Psoas muscle (tissue), 8 donors: ENCODE measurements at regions of chr21 and their contacts with region 1.

Region 1: DNA sequence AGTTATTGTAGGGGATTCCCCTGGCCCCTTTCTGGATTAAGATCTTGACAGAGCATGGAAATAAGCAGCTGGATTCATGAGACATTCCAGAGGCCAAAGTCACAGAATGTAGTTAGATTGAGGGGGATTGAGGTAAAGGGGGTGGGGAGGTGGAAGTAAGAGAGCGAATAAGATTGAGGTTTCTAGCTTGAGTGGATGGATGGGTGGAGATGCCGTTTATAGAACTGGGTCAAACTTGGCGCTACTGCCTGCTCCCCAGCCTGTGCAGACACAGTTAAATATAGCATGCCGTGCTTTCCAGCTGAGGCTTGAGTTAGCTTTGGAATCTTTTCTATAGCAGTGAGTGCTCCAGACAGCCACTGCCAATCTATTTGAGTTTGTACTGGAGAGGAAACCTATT is 85.7 kb downstream of the DYRK1A start:
- DNase-seq: peak in 1 of 2 donors; percentile 59
- ATAC-seq: peak; percentile 84 to 88 (median 84)
- H3K4me3 ChIP-seq: no peak overlapping the region
- H3K27ac ChIP-seq: peak overlapping the region; percentile 80
- H3K4me1 ChIP-seq: peaks cover 85% of the 10 kb centered on the region
- H3K27me3 ChIP-seq: no peaks in the 10 kb centered on the region
- CTCF ChIP-seq: no peak

Region 2: DNA sequence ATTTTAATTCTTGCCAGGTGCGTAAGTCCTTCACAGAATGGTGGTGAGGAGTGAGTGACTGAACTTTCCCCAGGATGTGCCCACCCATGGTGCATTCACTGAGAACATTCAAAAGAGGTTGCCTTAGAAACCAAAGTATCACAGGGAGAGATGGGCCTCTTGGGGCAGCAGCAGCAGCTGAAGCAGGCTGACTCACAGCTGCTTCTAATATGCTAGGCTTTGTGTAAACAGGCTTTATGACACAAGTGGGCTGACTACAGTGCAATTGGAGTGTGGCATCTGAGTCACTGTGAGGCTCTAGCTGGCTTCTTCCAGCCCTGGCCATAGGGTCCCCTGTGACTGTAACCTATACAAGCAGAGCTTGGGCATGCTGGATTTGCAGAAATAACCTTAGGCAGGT is 391.9 kb before region 1 on chr21:
- intact Hi-C with region 1: no loop called
- DNase-seq: peak; percentile 36 to 63
- ATAC-seq: peak; percentile 64 to 83 (median 72)
- H3K4me3 ChIP-seq: no peak overlapping the region
- H3K27ac ChIP-seq: no peak overlapping the region
- H3K4me1 ChIP-seq: no peaks in the 10 kb centered on the region
- H3K27me3 ChIP-seq: no peaks in the 10 kb centered on the region
- CTCF ChIP-seq: no peak

Region 3: GRCh38 chr21:37412603-37413360 is 39.4 kb before region 1 on chr21:
- intact Hi-C with region 1: loop called in 1 of 2 experiments (anchors 5 kb)
- DNase-seq: no peak
- ATAC-seq: no peak
- H3K4me3 ChIP-seq: no peak overlapping the region
- H3K27ac ChIP-seq: peak overlapping the region; percentile 6
- H3K4me1 ChIP-seq: peaks cover 97% of the 10 kb centered on the region
- H3K27me3 ChIP-seq: no peaks in the 10 kb centered on the region
- CTCF ChIP-seq: no peak